Panc1 (cell line): ENCODE measurements at regions of chr20 and their contacts with region 1.

Region 1: GRCh38 chr20:40728470-40728869 is 39.4 kb upstream of the MAFB start:
- DNase-seq: no peak
- ATAC-seq: no peak
- H3K4me3 ChIP-seq: no peak overlapping the region
- H3K27ac ChIP-seq: no peak overlapping the region
- H3K4me1 ChIP-seq: no peaks in the 10 kb centered on the region
- H3K27me3 ChIP-seq: no peaks in the 10 kb centered on the region; the same call in 1 of the 2 replicates
- CTCF ChIP-seq: peak; percentile 6; the same call in 1 of the 2 replicates

Region 2: GRCh38 chr20:39044501-39044900 is 1684.0 kb before region 1 on chr20:
- CTCF ChIA-PET with region 1: no interaction called
- POLR2A ChIA-PET with region 1: interaction called, 10 read pairs
- in situ Hi-C with region 1: no loop called
- intact Hi-C with region 1: no loop called
- DNase-seq: no peak
- ATAC-seq: no peak
- H3K4me3 ChIP-seq: no peak overlapping the region
- H3K27ac ChIP-seq: no peak overlapping the region
- H3K4me1 ChIP-seq: peaks cover 3% of the 10 kb centered on the region; the same call in 1 of the 2 replicates
- H3K27me3 ChIP-seq: no peaks in the 10 kb centered on the region
- CTCF ChIP-seq: no peak